ENCODE measurements at regions of chr1 and their contacts with region 1.

Region 1: DNA sequence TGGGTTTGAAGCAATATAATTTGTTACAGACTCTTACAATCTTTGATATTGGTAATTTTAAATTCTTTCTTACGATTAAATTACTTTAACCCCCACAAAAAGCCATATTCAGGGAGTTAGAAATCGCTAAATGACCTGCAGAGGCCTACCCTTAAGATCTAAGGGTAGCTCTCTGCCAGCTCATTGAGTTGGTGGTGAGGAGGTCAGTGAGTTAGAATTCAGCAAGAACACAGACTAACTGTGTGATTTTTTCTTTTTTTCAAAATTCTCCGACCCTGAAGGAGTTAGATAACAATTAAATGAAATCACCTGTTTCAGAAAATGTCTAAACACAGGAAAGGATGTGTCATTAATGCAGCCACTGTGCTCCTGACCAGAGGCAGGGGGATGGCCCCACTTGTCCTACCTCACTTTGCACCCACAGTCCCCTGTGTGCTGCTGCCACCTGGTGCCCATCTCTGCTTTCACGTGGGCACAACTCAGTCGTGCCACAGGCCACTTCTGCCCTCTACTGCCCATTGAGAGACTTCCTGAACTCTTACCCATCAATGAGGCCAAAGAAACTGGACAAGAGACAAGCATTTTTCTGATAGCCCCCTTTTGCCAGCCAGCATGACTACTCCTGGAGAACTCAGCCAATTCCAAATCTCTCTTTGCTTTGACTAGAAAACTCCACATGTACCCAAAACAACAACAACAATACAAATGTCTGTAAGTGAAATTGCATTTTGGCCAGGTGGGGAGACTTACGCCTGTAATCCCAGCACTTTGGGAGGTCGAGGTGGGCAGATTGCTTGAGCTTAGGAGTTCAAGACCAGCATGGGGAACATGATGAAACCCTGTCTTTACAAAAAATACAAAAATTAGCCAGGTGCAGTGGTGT is 8.4 kb downstream of the CFAP45 start:
- H3K4me3 Mint-ChIP-seq: no peak overlapping the region
- H3K27ac Mint-ChIP-seq: no peak overlapping the region
- H3K4me1 Mint-ChIP-seq: peaks cover 59% of the 10 kb centered on the region
- H3K27me3 Mint-ChIP-seq: no peaks in the 10 kb centered on the region

Region 2: GRCh38 chr1:159161001-159161718 is 730.4 kb before region 1 on chr1:
- intact Hi-C with region 1: loop called (anchors 10 kb)
- H3K4me3 Mint-ChIP-seq: no peak overlapping the region
- H3K27ac Mint-ChIP-seq: no peak overlapping the region
- H3K4me1 Mint-ChIP-seq: peaks cover 16% of the 10 kb centered on the region
- H3K27me3 Mint-ChIP-seq: peaks cover 35% of the 10 kb centered on the region

Region 3: GRCh38 chr1:159780583-159781582 is 110.6 kb before region 1 on chr1 and contains the start of gene DUSP23:
- intact Hi-C with region 1: loop called (anchors 5 kb)
- H3K4me3 Mint-ChIP-seq: peak within 1 kb of the TSS; percentile 80
- H3K27ac Mint-ChIP-seq: peak within 1 kb of the TSS; percentile 82
- H3K4me1 Mint-ChIP-seq: peaks cover 52% of the 10 kb centered on the region
- H3K27me3 Mint-ChIP-seq: no peaks in the 10 kb centered on the region

Region 4: DNA sequence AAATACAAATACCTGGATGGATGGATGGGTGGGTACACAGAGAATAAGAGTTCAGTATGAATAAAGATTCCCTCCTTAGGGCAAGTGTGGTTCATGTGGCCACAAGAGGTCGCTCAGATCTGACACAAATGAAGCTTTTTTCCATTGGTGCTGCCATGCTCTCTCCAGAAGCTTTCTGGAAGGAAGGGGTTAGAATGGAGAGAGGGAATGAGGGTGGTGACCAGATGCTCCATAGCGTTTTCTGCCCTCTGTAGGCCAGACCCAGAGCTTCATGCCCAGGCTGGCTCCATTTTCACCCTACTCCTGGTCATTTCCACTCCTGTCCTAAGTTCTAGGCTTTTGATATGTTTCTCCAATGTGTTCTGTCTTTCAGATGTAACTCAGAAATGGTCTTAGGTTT is 92.6 kb before region 1 on chr1:
- intact Hi-C with region 1: loop called (anchors 1 kb)
- H3K4me3 Mint-ChIP-seq: no peak overlapping the region
- H3K27ac Mint-ChIP-seq: no peak overlapping the region
- H3K4me1 Mint-ChIP-seq: peaks cover 52% of the 10 kb centered on the region
- H3K27me3 Mint-ChIP-seq: peaks cover 13% of the 10 kb centered on the region

Region 5: GRCh38 chr1:159829273-159829634 is 62.3 kb before region 1 on chr1:
- intact Hi-C with region 1: loop called (anchors 1 kb)
- H3K4me3 Mint-ChIP-seq: peak overlapping the region; percentile 98
- H3K27ac Mint-ChIP-seq: peak overlapping the region; percentile 99
- H3K4me1 Mint-ChIP-seq: peaks cover 95% of the 10 kb centered on the region
- H3K27me3 Mint-ChIP-seq: no peaks in the 10 kb centered on the region

Region 6: GRCh38 chr1:159936273-159936904 is 44.9 kb after region 1 on chr1:
- intact Hi-C with region 1: loop called (anchors 5 kb)
- H3K4me3 Mint-ChIP-seq: no peak overlapping the region
- H3K27ac Mint-ChIP-seq: no peak overlapping the region
- H3K4me1 Mint-ChIP-seq: peaks cover 67% of the 10 kb centered on the region
- H3K27me3 Mint-ChIP-seq: peaks cover 14% of the 10 kb centered on the region

Region 7: GRCh38 chr1:160006312-160006940 is 114.9 kb after region 1 on chr1:
- intact Hi-C with region 1: loop called (anchors 2 kb)
- H3K4me3 Mint-ChIP-seq: no peak overlapping the region
- H3K27ac Mint-ChIP-seq: no peak overlapping the region
- H3K4me1 Mint-ChIP-seq: peaks cover 7% of the 10 kb centered on the region
- H3K27me3 Mint-ChIP-seq: no peaks in the 10 kb centered on the region

Region 8: GRCh38 chr1:160144921-160145320 is 253.4 kb after region 1 on chr1:
- intact Hi-C with region 1: no loop called
- H3K4me3 Mint-ChIP-seq: no peak overlapping the region
- H3K27ac Mint-ChIP-seq: no peak overlapping the region
- H3K4me1 Mint-ChIP-seq: peaks cover 45% of the 10 kb centered on the region
- H3K27me3 Mint-ChIP-seq: peaks cover 1% of the 10 kb centered on the region

Measured in dendritic cell treated with granulocyte-macrophage colony-stimulating factor and Interleukin-4, amounts not matched to agents 40 ng/mL and 50 ng/mL, for 4 days (primary cell).